MCF 10A (cell line): ENCODE measurements at regions of chr19 and their contacts with region 1.

Region 1: GRCh38 chr19:1269065-1269477 is at the start of gene CIRBP:
- DNase-seq: peak; percentile 99
- H3K4me3 Mint-ChIP-seq: peak within 1 kb of the TSS; percentile 84
- H3K27ac Mint-ChIP-seq: peak within 1 kb of the TSS; percentile 89
- H3K4me1 Mint-ChIP-seq: peaks cover 24% of the 10 kb centered on the region
- H3K27me3 Mint-ChIP-seq: no peaks in the 10 kb centered on the region
- CTCF ChIP-seq: no peak
- total RNA-seq, gene CIRBP: 316 and 362 TPM in 2 replicates

Region 2: GRCh38 chr19:1110809-1111591 is 158.1 kb before region 1 on chr19:
- CTCF ChIA-PET with region 1: no interaction called
- POLR2A ChIA-PET with region 1: no interaction called
- intact Hi-C with region 1: no loop called
- DNase-seq: no peak
- H3K4me3 Mint-ChIP-seq: no peak overlapping the region
- H3K27ac Mint-ChIP-seq: no peak overlapping the region
- H3K4me1 Mint-ChIP-seq: no peaks in the 10 kb centered on the region
- H3K27me3 Mint-ChIP-seq: no peaks in the 10 kb centered on the region
- CTCF ChIP-seq: no peak

Region 3: GRCh38 chr19:1213391-1214286 is 55.4 kb before region 1 on chr19:
- CTCF ChIA-PET with region 1: interaction called, 3 read pairs
- POLR2A ChIA-PET with region 1: interaction called, 16 read pairs
- intact Hi-C with region 1: no loop called
- DNase-seq: peak; percentile 91
- H3K4me3 Mint-ChIP-seq: peak overlapping the region; percentile 63
- H3K27ac Mint-ChIP-seq: peak overlapping the region; percentile 89
- H3K4me1 Mint-ChIP-seq: peaks cover 46% of the 10 kb centered on the region
- H3K27me3 Mint-ChIP-seq: no peaks in the 10 kb centered on the region
- CTCF ChIP-seq: no peak

Region 4: DNA sequence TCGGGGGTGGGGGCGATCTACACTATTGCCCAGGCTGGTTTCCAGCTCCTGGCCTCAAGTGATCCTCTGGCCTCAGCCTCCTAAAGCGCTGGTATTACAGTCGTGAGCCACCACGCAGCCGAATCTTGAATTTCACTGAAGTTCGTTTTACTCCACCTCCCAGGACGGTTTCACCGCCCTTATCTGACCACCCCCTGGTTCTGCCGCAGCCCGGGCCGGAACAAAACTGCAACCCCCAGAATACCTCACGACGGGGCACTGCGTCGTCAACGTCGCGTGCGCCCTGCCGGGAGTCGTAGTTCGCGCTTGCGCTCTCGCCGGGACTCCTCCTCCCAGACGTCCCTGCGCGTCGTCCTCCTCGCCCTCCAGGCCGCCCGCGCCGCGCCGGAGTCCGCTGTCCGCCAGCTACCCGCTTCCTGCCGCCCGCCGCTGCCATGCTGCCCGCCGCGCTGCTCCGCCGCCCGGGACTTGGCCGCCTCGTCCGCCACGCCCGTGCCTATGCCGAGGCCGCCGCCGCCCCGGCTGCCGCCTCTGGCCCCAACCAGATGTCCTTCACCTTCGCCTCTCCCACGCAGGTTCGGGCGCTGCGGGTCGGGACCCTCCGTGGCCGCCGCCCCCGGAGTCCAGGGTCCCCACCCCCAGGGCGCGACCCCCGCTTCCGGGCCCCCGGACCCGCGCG is 27.5 kb before region 1 on chr19 and contains the start of gene ATP5F1D:
- CTCF ChIA-PET with region 1: interaction called, 144 read pairs
- POLR2A ChIA-PET with region 1: interaction called, 240 read pairs
- intact Hi-C with region 1: loop called (anchors 1 kb)
- DNase-seq: peak; percentile 93
- H3K4me3 Mint-ChIP-seq: peak within 1 kb of the TSS; percentile 71
- H3K27ac Mint-ChIP-seq: peak within 1 kb of the TSS; percentile 75
- H3K4me1 Mint-ChIP-seq: peaks cover 10% of the 10 kb centered on the region
- H3K27me3 Mint-ChIP-seq: no peaks in the 10 kb centered on the region
- CTCF ChIP-seq: no peak
- total RNA-seq, gene ATP5F1D: 256 and 258 TPM in 2 replicates

Region 5: GRCh38 chr19:1249298-1249989 is 19.6 kb before region 1 on chr19:
- CTCF ChIA-PET with region 1: interaction called, 144 read pairs
- POLR2A ChIA-PET with region 1: interaction called, 240 read pairs
- intact Hi-C with region 1: loop called (anchors 1 kb)
- DNase-seq: peak; percentile 97
- H3K4me3 Mint-ChIP-seq: peak overlapping the region; percentile 86
- H3K27ac Mint-ChIP-seq: no peak overlapping the region
- H3K4me1 Mint-ChIP-seq: peaks cover 9% of the 10 kb centered on the region
- H3K27me3 Mint-ChIP-seq: no peaks in the 10 kb centered on the region
- CTCF ChIP-seq: no peak

Region 6: DNA sequence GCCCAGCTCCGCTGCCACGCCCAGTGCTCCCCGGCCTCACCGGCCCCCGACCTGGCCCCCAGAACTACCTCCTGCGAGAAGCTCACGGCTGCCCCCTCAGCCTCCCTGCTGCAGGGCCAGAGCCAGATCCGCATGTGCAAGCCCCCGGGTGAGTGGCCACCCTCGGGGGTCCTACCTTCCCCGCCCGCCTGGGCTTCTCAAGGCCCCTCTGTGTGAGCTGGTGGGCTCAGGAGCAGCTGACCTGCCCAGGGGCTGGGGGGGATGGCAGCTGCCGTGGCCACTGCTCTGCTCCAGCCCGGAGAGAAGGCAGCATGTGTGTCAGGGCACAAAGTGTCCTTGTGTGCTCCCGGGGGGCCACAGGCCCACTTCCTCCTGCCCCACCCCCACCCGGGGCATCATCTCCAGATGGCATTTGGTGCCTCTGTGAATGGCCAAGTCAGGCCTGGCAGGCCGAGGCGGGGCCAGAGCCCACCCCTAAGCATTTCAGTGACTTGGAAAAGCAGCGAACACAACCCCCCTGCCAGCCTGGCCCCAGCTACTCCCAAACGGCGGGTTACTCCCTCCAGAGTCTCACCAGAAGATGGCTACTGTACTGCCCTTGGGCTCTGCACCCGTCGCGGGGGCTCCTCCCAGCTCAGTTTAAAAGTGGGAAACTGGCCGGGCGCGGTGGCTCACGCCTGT is 13.4 kb before region 1 on chr19:
- CTCF ChIA-PET with region 1: interaction called, 19 read pairs
- POLR2A ChIA-PET with region 1: interaction called, 89 read pairs
- intact Hi-C with region 1: no loop called
- DNase-seq: no peak
- H3K4me3 Mint-ChIP-seq: no peak overlapping the region
- H3K27ac Mint-ChIP-seq: no peak overlapping the region
- H3K4me1 Mint-ChIP-seq: peaks cover 14% of the 10 kb centered on the region
- H3K27me3 Mint-ChIP-seq: no peaks in the 10 kb centered on the region
- CTCF ChIP-seq: no peak